WTC11 (cell line): ENCODE measurements at regions of chr4 and their contacts with region 1.

Region 1: GRCh38 chr4:1154523-1155182 is 17.7 kb downstream of the SPON2 start:
- DNase-seq: no peak
- ATAC-seq: no peak
- H3K4me3 Mint-ChIP-seq: no peak overlapping the region
- H3K27ac Mint-ChIP-seq: no peak overlapping the region
- H3K4me1 Mint-ChIP-seq: no peaks in the 10 kb centered on the region
- H3K27me3 Mint-ChIP-seq: peaks cover 33% of the 10 kb centered on the region
- CTCF ChIP-seq: no peak

Region 2: DNA sequence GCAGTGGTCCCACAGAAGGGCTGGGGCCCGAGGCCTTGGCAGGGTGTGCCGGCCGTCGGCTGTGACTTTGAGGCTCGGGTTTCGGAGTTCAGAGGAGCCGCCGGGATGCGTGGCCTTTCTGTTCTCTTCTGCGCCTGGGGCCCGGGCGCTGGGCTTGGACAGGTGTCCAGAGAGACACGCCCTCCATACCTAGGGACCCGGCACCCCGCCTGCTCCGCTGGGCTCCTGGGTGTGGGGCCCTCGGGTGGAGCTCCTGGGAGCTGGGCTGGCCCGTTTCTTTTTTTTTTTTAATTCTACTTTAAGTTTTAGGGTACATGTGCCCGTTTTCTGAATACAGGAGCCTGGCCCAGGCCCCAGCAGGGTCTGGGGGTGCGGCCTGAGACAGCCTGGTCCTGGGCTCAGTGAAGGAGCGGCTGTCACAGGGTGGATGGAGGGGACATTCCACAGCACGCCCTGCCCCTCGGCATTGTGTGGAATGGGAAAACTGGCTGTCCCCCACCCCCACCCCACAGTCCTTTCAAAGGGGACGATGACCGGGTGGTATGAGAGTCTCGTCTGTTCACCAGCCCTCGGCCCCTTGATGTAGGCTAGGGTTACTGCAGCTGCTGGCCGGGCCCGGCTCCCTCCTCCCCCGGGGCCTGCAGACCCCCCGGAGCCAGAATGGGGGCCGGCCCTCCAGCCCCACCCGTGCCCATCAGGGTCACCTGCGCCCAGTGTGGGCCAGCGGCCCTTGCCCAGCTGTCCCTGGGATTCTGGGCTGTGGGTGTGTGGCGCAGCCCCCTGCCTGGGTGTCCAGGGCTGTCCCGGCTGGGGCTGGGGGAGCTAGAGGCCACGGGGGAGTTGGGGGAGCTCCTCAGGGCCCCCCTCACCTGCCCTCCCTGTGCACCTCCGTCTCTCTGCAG is 131.7 kb before region 1 on chr4:
- CTCF ChIA-PET with region 1: no interaction called
- POLR2A ChIA-PET with region 1: interaction called, 10 read pairs
- DNase-seq: no peak
- ATAC-seq: no peak
- H3K4me3 Mint-ChIP-seq: no peak overlapping the region
- H3K27ac Mint-ChIP-seq: no peak overlapping the region
- H3K4me1 Mint-ChIP-seq: no peaks in the 10 kb centered on the region; the same call in 1 of the 2 replicates
- H3K27me3 Mint-ChIP-seq: no peaks in the 10 kb centered on the region
- CTCF ChIP-seq: no peak

Region 3: DNA sequence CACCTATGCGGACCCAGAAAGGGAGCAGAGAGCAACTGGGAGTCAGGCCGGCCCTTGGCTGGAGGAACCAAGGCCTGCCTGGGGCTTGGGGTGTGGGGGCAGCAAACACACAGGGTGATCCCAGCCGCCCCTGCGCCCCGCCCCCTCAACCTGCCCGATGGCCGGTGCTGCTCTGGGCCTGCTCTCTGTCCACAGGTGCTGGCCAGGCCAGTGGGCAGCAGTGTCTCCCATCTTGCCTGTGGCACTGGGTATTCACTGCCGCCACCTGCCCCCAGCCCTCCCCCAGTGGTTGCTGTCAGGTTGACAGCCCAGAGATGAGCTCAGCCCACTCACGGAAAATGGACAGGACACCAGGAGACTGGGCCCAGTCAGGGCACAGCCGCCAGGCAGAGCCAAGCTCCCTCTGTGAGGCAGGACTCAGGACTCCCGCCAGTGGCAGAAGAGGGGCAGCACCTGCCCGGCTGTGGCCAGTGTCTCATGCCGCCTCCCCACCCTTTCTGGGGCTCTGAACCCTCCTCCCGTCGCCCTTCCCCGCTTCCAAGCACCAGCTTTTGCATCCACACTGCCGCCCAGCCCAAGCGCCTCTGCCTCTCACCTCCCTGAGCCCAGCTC is 246.9 kb after region 1 on chr4:
- CTCF ChIA-PET with region 1: no interaction called
- POLR2A ChIA-PET with region 1: no interaction called
- DNase-seq: no peak
- ATAC-seq: no peak
- H3K4me3 Mint-ChIP-seq: no peak overlapping the region
- H3K27ac Mint-ChIP-seq: no peak overlapping the region
- H3K4me1 Mint-ChIP-seq: peaks cover 2% of the 10 kb centered on the region
- H3K27me3 Mint-ChIP-seq: peaks cover 63% of the 10 kb centered on the region
- CTCF ChIP-seq: no peak